Activated T-helper 1 cell treated with anti-CD3 and anti-CD28 coated beads, Interleukin-12 subunit alpha, Interleukin-12 subunit beta, Interleukin-2, Interleukin-4 antibody, amounts not matched to agents 30 ng/mL and 10 ng/mL and 1 ng/mL, durations not matched to agents 14 hours and 24 hours and 36 hours (primary cell): ENCODE measurements at regions of chr5 and their contacts with region 1.

Region 1: DNA sequence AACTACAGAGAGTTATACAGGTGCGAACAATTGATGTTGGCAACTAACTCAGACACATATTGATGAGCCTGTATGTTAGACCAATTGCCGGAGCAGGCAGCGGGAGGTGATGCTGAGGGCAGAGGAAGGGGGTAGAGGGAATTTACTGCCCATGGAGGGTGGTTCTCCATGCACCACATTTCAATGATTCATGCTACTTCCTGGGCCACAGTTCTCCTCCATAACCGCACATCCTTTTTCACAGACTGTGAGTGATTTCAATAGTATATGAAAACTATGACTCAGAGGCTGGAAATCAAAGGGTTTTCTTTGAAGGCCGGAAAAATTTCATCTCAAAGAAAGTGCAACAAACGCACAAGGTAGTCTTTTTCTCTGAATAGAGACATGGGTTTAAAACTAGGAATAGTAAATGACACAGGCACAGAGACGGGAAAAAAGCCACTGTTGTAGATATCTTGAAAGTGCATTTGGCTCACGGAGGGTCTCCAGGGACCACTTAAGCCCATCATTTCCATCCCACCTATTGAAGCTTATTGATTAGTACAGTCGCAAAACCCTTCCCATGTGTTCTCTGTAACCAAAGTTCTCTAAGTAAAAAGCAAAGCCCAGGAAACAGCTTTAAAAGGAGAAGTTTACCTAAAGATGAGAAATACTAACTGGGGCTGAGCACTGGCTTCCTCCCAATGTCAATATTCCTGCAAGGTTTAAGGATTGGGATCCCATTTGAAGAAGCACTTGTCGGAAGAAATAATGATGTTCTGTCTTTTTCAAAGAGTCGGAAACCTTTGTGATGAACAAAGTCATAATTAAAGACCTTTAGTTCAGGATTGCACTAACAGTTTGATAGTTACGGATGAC is 28.0 kb upstream of the ADAM19 start:
- DNase-seq: peak; percentile 74
- H3K4me3 Mint-ChIP-seq: peak overlapping the region; percentile 59
- H3K27ac Mint-ChIP-seq: peak overlapping the region; percentile 88
- H3K4me1 Mint-ChIP-seq: peaks cover 79% of the 10 kb centered on the region
- H3K27me3 Mint-ChIP-seq: no peaks in the 10 kb centered on the region

Region 2: GRCh38 chr5:157046041-157046440 is 557.5 kb before region 1 on chr5:
- intact Hi-C with region 1: no loop called
- DNase-seq: no peak
- H3K4me3 Mint-ChIP-seq: no peak overlapping the region
- H3K27ac Mint-ChIP-seq: peak overlapping the region; percentile 13
- H3K4me1 Mint-ChIP-seq: peaks cover 53% of the 10 kb centered on the region
- H3K27me3 Mint-ChIP-seq: no peaks in the 10 kb centered on the region

Region 3: GRCh38 chr5:157516626-157517325 is 86.8 kb before region 1 on chr5:
- intact Hi-C with region 1: no loop called
- DNase-seq: no peak
- H3K4me3 Mint-ChIP-seq: no peak overlapping the region
- H3K27ac Mint-ChIP-seq: peak overlapping the region; percentile 57
- H3K4me1 Mint-ChIP-seq: peaks cover 86% of the 10 kb centered on the region
- H3K27me3 Mint-ChIP-seq: no peaks in the 10 kb centered on the region

Region 4: DNA sequence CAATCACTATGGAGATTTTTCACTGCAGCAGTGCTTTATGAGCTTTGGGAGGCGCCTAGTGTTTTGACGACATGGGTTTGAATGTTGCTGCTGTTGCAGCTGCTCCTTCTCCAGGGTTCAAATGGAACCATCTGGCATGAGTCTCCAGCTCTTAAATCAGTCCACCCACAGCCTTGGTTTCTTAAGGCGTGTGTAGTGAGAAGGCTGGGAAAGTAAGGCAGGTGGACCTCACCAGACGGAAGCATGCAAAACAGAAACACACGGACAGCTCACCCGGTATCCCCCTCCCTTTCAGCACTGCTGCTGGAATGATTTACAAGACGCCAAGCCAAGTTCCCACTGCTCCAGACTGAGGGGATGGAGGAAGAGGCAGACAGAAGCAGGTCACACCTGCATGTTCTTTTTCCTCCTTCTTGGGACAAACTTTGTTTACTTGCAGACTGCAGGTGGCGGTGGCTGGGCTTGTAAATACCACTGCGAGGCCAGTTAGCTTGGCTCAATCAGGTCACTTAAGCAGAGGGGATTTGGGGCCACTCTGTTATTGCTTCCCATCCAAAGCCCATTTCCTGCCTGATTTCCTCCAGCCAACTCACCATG is 75.4 kb before region 1 on chr5:
- intact Hi-C with region 1: no loop called
- DNase-seq: no peak
- H3K4me3 Mint-ChIP-seq: no peak overlapping the region
- H3K27ac Mint-ChIP-seq: peak overlapping the region; percentile 58
- H3K4me1 Mint-ChIP-seq: peaks cover 88% of the 10 kb centered on the region
- H3K27me3 Mint-ChIP-seq: no peaks in the 10 kb centered on the region

Region 5: DNA sequence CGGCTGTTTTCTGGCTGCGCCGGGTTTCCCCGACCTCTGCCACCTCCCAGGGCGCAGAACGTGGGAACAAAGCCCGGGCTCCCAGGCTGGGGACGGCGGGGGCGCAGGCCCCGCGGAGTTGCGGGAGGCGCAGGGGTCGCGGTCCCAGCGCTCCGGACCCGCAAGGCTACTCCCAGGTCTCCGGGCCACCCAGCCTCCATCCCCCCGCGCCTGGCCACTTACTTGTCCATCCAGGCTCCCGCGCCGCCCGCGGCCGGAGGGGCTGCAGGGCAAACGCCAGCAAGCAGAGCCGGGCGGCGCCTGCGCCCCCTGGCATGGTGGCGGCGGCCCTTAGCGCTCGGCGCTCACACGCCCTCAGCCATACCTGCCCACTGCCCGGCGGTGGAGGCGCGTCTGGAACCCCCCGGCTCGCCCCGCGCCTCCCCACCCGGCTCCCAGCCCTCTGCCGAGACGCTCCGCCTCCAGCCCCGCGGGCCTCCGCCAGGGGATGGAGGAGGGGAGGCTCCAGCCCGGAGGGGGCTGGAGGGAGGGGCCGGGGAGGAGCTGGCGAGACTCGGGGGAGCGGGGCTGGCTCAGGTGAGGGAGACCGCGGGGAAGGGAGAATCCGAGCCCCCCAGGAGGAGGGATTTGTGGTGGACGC is 28.1 kb before region 1 on chr5 and contains the start of gene ADAM19:
- intact Hi-C with region 1: loop called (anchors 1 kb)
- DNase-seq: peak; percentile 58
- H3K4me3 Mint-ChIP-seq: peak within 1 kb of the TSS; percentile 96
- H3K27ac Mint-ChIP-seq: peak within 1 kb of the TSS; percentile 92
- H3K4me1 Mint-ChIP-seq: peaks cover 64% of the 10 kb centered on the region
- H3K27me3 Mint-ChIP-seq: no peaks in the 10 kb centered on the region
- total RNA-seq, gene ADAM19: 341 and 348 TPM in 2 replicates

Region 6: GRCh38 chr5:157582731-157583620 is 20.6 kb before region 1 on chr5:
- intact Hi-C with region 1: loop called (anchors 1 kb)
- DNase-seq: no peak
- H3K4me3 Mint-ChIP-seq: peak overlapping the region; percentile 48
- H3K27ac Mint-ChIP-seq: peak overlapping the region; percentile 80
- H3K4me1 Mint-ChIP-seq: peaks cover 69% of the 10 kb centered on the region
- H3K27me3 Mint-ChIP-seq: no peaks in the 10 kb centered on the region

Region 7: GRCh38 chr5:157651623-157652549 is 48.3 kb after region 1 on chr5 and contains the start of gene SOX30:
- intact Hi-C with region 1: loop called (anchors 2 kb)
- DNase-seq: peak; percentile 75
- H3K4me3 Mint-ChIP-seq: peak within 1 kb of the TSS; percentile 80
- H3K27ac Mint-ChIP-seq: peak within 1 kb of the TSS; percentile 86
- H3K4me1 Mint-ChIP-seq: peaks cover 10% of the 10 kb centered on the region
- H3K27me3 Mint-ChIP-seq: no peaks in the 10 kb centered on the region
- total RNA-seq, gene SOX30: 0.12 and 0.29 TPM in 2 replicates

Region 8: DNA sequence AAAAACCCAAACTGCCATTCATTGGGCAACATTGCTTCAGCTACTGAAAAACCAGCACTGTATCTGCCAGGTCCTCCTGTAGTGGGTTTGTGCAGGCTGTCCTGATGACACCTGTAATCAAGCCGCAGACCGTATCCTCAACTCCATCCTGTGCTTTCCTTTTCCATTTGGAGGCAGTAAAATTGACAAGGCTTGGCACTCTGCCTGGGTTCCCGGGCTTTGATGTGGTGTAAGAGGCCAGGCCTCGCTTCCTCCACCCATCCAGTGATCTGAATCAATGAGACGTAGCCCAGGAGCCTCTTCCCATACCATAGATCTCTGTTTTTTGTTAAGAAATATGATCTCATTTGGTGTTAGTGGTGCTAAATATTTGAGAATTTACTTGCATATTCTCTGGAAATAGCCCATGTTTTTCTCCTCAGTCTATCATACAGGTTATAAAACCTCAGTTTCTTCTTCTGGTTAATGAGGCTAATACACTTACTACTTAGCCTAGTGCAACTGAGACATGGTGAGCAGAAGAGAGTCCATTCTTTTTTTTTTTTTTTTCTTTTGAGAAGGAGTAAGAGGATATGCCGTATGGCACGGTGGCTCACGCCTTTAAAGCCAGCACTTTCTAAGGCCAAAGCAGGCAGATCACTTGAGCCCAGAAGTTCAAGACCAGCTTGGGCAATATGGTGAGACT is 174.7 kb after region 1 on chr5:
- intact Hi-C with region 1: no loop called
- DNase-seq: no peak
- H3K4me3 Mint-ChIP-seq: no peak overlapping the region
- H3K27ac Mint-ChIP-seq: no peak overlapping the region
- H3K4me1 Mint-ChIP-seq: no peaks in the 10 kb centered on the region
- H3K27me3 Mint-ChIP-seq: no peaks in the 10 kb centered on the region